ENCODE measurements at regions of chr9 and their contacts with region 1.

Region 1: GRCh38 chr9:133335878-133336811 is at the start of gene SURF6:
- DNase-seq: peak; percentile 85 to 97 (median 91)
- ATAC-seq: peak; percentile 93
- H3K4me3 ChIP-seq: peak within 1 kb of the TSS; percentile 86
- H3K4me3 Mint-ChIP-seq: peak within 1 kb of the TSS; percentile 97
- H3K27ac ChIP-seq: peak within 1 kb of the TSS; percentile 64 to 77
- H3K27ac Mint-ChIP-seq: peak within 1 kb of the TSS; percentile 91
- H3K4me1 ChIP-seq: peaks cover 54% of the 10 kb centered on the region
- H3K4me1 Mint-ChIP-seq: peaks cover 32% of the 10 kb centered on the region
- H3K27me3 ChIP-seq: no peaks in the 10 kb centered on the region
- H3K27me3 Mint-ChIP-seq: no peaks in the 10 kb centered on the region
- CTCF ChIP-seq: no peak
- total RNA-seq, gene SURF6: 15.1 to 15.9 TPM

Region 2: GRCh38 chr9:132669698-132670456 is 666.3 kb before region 1 on chr9 and contains the start of gene DDX31:
- CTCF ChIA-PET with region 1: no interaction called
- POLR2A ChIA-PET with region 1: no interaction called
- intact Hi-C with region 1: loop called in 1 of 2 experiments (anchors 5 kb)
- DNase-seq: peak; percentile 78 to 94 (median 84)
- ATAC-seq: peak; percentile 77
- H3K4me3 ChIP-seq: peak within 1 kb of the TSS; percentile 100
- H3K4me3 Mint-ChIP-seq: peak within 1 kb of the TSS; percentile 98
- H3K27ac ChIP-seq: peak within 1 kb of the TSS; percentile 97 to 99
- H3K27ac Mint-ChIP-seq: peak within 1 kb of the TSS; percentile 92
- H3K4me1 ChIP-seq: peaks cover 32% of the 10 kb centered on the region
- H3K4me1 Mint-ChIP-seq: peaks cover 54% of the 10 kb centered on the region
- H3K27me3 ChIP-seq: no peaks in the 10 kb centered on the region
- H3K27me3 Mint-ChIP-seq: no peaks in the 10 kb centered on the region
- CTCF ChIP-seq: no peak
- total RNA-seq, gene DDX31: 11.0 to 11.3 TPM

Region 3: GRCh38 chr9:133184962-133185361 is 151.2 kb before region 1 on chr9:
- CTCF ChIA-PET with region 1: no interaction called
- POLR2A ChIA-PET with region 1: no interaction called
- intact Hi-C with region 1: loop called in 1 of 2 experiments (anchors 5 kb)
- DNase-seq: peak in 7 of 14 experiments; percentile 16 to 70 (median 42)
- ATAC-seq: peak; percentile 58
- H3K4me3 ChIP-seq: no peak overlapping the region
- H3K4me3 Mint-ChIP-seq: peak overlapping the region; percentile 12
- H3K27ac ChIP-seq: no peak overlapping the region
- H3K27ac Mint-ChIP-seq: no peak overlapping the region
- H3K4me1 ChIP-seq: peaks cover 12% of the 10 kb centered on the region
- H3K4me1 Mint-ChIP-seq: peaks cover 19% of the 10 kb centered on the region
- H3K27me3 ChIP-seq: peaks cover 8 to 14% of the 10 kb centered on the region in 2 experiments
- H3K27me3 Mint-ChIP-seq: peaks cover 31% of the 10 kb centered on the region
- CTCF ChIP-seq: peak; percentile 55

Region 4: GRCh38 chr9:133356391-133357091 is 20.4 kb after region 1 on chr9 and contains the starts of genes SURF1 and SURF2:
- CTCF ChIA-PET with region 1: no interaction called
- POLR2A ChIA-PET with region 1: interaction called, 5 read pairs
- intact Hi-C with region 1: loop called in 1 of 2 experiments (anchors 1 kb)
- DNase-seq: peak; percentile 81 to 94 (median 90)
- ATAC-seq: peak; percentile 95
- H3K4me3 ChIP-seq: peak within 1 kb of the TSS; percentile 74
- H3K4me3 Mint-ChIP-seq: peak within 1 kb of the TSS; percentile 92
- H3K27ac ChIP-seq: peak within 1 kb of the TSS; percentile 56 to 79
- H3K27ac Mint-ChIP-seq: peak within 1 kb of the TSS; percentile 88
- H3K4me1 ChIP-seq: peaks cover 50% of the 10 kb centered on the region
- H3K4me1 Mint-ChIP-seq: peaks cover 27% of the 10 kb centered on the region
- H3K27me3 ChIP-seq: no peaks in the 10 kb centered on the region
- H3K27me3 Mint-ChIP-seq: no peaks in the 10 kb centered on the region
- CTCF ChIP-seq: no peak
- total RNA-seq, gene SURF1: 42.5 to 45.9 TPM
- total RNA-seq, gene SURF2: 12.7 TPM

Region 5: GRCh38 chr9:133417541-133418461 is 81.7 kb after region 1 on chr9 and contains the start of gene REXO4:
- CTCF ChIA-PET with region 1: no interaction called
- POLR2A ChIA-PET with region 1: no interaction called
- intact Hi-C with region 1: loop called in 1 of 2 experiments (anchors 1 kb)
- DNase-seq: peak; percentile 71 to 91 (median 78)
- ATAC-seq: peak; percentile 86
- H3K4me3 ChIP-seq: peak within 1 kb of the TSS; percentile 79
- H3K4me3 Mint-ChIP-seq: peak within 1 kb of the TSS; percentile 92
- H3K27ac ChIP-seq: peak within 1 kb of the TSS; percentile 68 to 82
- H3K27ac Mint-ChIP-seq: peak within 1 kb of the TSS; percentile 86
- H3K4me1 ChIP-seq: peaks cover 34% of the 10 kb centered on the region
- H3K4me1 Mint-ChIP-seq: peaks cover 42% of the 10 kb centered on the region
- H3K27me3 ChIP-seq: no peaks in the 10 kb centered on the region
- H3K27me3 Mint-ChIP-seq: no peaks in the 10 kb centered on the region
- CTCF ChIP-seq: no peak
- total RNA-seq, gene REXO4: 17.3 to 18.5 TPM

Region 6: GRCh38 chr9:133478851-133479711 is 142.9 kb after region 1 on chr9 and contains the start of gene SLC2A6:
- CTCF ChIA-PET with region 1: no interaction called
- POLR2A ChIA-PET with region 1: no interaction called
- intact Hi-C with region 1: loop called in 1 of 2 experiments (anchors 5 kb)
- DNase-seq: peak; percentile 56 to 90 (median 74)
- ATAC-seq: peak; percentile 97
- H3K4me3 ChIP-seq: peak within 1 kb of the TSS; percentile 57
- H3K4me3 Mint-ChIP-seq: peak within 1 kb of the TSS; percentile 78
- H3K27ac ChIP-seq: no peak within 1 kb of the TSS
- H3K27ac Mint-ChIP-seq: peak within 1 kb of the TSS; percentile 14
- H3K4me1 ChIP-seq: peaks cover 24% of the 10 kb centered on the region
- H3K4me1 Mint-ChIP-seq: peaks cover 9% of the 10 kb centered on the region
- H3K27me3 ChIP-seq: no peaks in the 10 kb centered on the region
- H3K27me3 Mint-ChIP-seq: no peaks in the 10 kb centered on the region
- CTCF ChIP-seq: no peak
- total RNA-seq, gene SLC2A6: 1.8 to 3.2 TPM